GM23248 (cell line): ENCODE measurements at regions of chr13 and their contacts with region 1.

Region 1: DNA sequence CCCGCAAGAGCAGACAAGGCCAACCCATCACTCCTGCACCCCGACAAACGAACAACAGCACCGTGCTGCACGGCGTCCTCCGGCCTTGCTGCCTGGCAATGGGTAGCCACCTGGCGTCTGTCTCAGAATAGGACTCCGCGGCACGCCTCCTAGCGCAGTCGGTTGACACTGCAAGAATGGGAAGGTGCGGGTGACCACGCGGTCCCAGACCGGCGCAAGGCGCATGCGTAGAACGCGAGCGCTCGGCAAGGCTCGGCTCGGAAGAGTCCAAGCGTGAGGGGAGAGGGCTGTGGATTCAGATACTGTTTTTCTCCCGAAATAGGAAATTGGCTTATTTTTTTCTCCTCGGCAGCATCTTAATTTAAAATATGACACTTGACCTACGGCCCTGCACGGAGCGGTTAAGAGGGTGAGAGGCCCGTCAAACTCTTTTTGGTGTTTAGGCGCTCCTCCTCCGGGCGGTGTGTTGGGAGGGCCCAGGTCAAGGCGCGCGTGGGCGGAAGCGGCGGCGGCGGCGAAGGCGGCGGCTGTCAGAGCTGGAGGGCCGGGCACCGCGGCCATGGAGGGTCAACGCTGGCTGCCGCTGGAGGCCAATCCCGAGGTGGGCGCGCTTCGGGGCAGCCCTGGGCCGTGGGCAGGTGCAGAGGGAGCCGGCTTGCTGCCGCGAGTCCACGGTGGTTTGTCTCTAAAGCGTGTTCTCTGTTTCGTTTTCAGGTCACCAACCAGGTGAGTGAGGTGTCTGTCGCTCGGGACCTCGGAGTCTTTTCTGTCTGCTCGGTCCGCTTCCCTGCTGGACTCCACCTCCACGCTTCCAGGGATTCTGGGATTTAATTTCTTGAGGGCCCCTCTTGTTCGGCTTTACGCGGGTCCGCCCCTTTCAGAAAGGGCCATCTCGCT is at the start of gene UCHL3:
- DNase-seq: peak; percentile 97
- H3K4me3 ChIP-seq: peak within 1 kb of the TSS; percentile 90
- H3K27ac ChIP-seq: peak within 1 kb of the TSS; percentile 79
- H3K4me1 ChIP-seq: peaks cover 26% of the 10 kb centered on the region
- H3K27me3 ChIP-seq: no peaks in the 10 kb centered on the region
- total RNA-seq, gene UCHL3: 42.8 and 46.7 TPM in 2 replicates

Region 2: DNA sequence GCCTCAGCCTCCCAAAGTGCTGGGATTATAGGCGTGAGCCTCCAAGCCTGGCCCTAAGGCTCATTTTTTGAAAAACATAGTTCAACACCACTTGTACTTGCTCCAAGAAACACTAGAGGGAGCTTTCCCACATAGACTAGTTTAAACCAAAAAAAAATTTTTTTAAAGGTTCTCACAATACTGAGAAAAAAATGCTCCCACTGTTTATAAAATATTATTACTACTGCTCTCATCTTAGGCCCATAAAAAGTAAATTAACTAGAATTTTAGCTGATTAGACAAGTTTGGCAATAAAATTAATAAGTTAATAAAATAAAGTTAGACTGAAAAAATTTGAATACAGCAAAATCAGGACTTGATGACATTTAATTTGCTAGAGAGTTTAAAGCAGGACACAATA is 177.0 kb before region 1 on chr13:
- in situ Hi-C with region 1: loop called (anchors 10 kb)
- DNase-seq: peak; percentile 79
- H3K4me3 ChIP-seq: no peak overlapping the region
- H3K27ac ChIP-seq: no peak overlapping the region
- H3K4me1 ChIP-seq: peaks cover 12% of the 10 kb centered on the region
- H3K27me3 ChIP-seq: no peaks in the 10 kb centered on the region

Region 3: DNA sequence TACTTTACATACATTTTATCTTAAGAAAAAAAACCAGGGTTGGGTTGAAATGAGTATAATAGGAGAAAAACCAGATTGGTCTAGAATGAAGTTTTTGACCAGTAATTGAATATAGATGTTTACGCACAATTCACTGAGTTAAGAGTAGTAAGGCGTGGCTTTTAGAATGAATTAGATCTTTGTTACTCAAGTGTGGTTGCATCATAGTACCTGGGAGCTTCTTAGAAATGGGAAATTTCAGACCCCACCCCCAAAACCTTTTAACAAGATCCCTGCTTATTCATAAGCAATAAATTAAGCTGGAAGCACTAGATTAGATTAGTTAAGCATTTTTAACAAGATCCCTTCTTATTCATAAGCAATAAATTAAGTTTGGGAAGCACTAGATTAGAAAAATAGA is 57.9 kb after region 1 on chr13:
- in situ Hi-C with region 1: no loop called
- DNase-seq: no peak
- H3K4me3 ChIP-seq: no peak overlapping the region
- H3K27ac ChIP-seq: no peak overlapping the region
- H3K4me1 ChIP-seq: no peaks in the 10 kb centered on the region
- H3K27me3 ChIP-seq: no peaks in the 10 kb centered on the region